IMR-90 (cell line): ENCODE measurements at regions of chr10 and their contacts with region 1.

Region 1: GRCh38 chr10:122861711-122862161 is 16.1 kb upstream of the CUZD1 start:
- DNase-seq: peak; percentile 77
- ATAC-seq: peak; percentile 74
- H3K4me3 ChIP-seq: no peak overlapping the region
- H3K27ac ChIP-seq: peak overlapping the region; percentile 81
- H3K4me1 ChIP-seq: peaks cover 15% of the 10 kb centered on the region
- H3K27me3 ChIP-seq: no peaks in the 10 kb centered on the region
- CTCF ChIP-seq: no peak
- POLR2A ChIP-seq: no peak
- RAD21 ChIP-seq: no peak

Region 2: DNA sequence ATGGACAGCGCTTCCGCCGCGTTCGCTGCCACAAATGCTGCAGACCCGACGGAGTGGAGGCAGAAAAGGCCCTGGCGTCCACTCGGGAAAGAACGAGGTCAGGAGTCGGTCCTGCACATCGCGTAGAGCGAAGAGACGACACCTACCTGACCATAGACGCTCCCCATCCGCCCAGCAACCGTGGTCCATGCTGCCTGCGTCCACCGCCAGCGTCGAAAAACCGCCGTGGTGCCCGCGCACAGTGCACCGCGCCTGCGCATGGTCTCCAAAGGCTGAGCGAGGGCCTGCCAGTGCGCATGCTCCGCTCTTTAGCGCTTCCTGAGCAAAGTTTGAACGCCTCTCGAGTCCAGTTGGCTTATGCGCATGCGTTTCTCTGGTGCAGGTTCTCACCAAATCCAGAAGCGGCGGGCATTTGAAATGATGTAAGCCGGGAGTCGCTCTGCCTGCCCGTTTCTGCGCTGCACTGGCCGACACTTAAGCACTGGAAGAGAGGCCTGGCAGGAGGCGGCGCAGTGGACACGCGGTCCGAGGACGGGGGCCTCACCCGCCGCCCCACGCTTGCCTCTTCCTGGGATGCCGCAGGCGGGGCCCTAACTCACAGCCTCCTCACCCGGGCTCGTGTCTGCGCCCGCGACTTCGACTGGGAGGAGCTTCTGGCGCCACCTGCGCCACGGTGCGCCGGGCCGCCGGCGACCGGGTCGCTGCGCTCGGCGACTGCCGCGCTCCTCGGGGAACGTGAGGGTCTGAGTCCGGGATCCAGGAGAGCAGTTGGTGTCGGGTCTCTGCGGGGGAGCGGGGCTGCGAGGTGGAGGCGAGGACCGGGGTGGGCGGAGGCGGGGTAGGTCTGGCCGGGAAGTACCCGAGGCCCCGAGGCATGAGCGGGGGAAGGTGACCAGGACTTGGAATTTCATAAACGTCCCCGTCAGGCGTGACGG is 17.9 kb after region 1 on chr10 and contains the start of gene FAM24B:
- CTCF ChIA-PET with region 1: no interaction called
- POLR2A ChIA-PET with region 1: interaction called, 3 read pairs
- dilution Hi-C with region 1: no loop called
- in situ Hi-C with region 1: no loop called
- intact Hi-C with region 1: loop called (anchors 2 kb)
- DNase-seq: peak; percentile 98
- ATAC-seq: peak; percentile 95
- H3K4me3 ChIP-seq: peak within 1 kb of the TSS; percentile 78
- H3K27ac ChIP-seq: peak within 1 kb of the TSS; percentile 64; the same call in 1 of the 2 replicates
- H3K4me1 ChIP-seq: peaks cover 3% of the 10 kb centered on the region
- H3K27me3 ChIP-seq: no peaks in the 10 kb centered on the region
- CTCF ChIP-seq: no peak
- POLR2A ChIP-seq: no peak
- RAD21 ChIP-seq: no peak; the same call in 1 of the 2 replicates
- total RNA-seq, gene FAM24B: 1.6 and 2.2 TPM in 2 replicates

Region 3: GRCh38 chr10:122939856-122940543 is 78.3 kb after region 1 on chr10:
- CTCF ChIA-PET with region 1: interaction called, 5 read pairs
- POLR2A ChIA-PET with region 1: no interaction called
- dilution Hi-C with region 1: no loop called
- in situ Hi-C with region 1: no loop called
- intact Hi-C with region 1: loop called (anchors 5 kb)
- DNase-seq: peak; percentile 91
- ATAC-seq: peak; percentile 82
- H3K4me3 ChIP-seq: no peak overlapping the region
- H3K27ac ChIP-seq: no peak overlapping the region
- H3K4me1 ChIP-seq: peaks cover 4% of the 10 kb centered on the region
- H3K27me3 ChIP-seq: no peaks in the 10 kb centered on the region
- CTCF ChIP-seq: no peak
- POLR2A ChIP-seq: no peak
- RAD21 ChIP-seq: no peak